ENCODE measurements at regions of chr2 and their contacts with region 1.

Region 1: GRCh38 chr2:157789933-157790511 is 86.1 kb downstream of the ACVR1 start:
- DNase-seq: peak; percentile 16
- H3K4me3 Mint-ChIP-seq: no peak overlapping the region
- H3K27ac Mint-ChIP-seq: no peak overlapping the region
- H3K4me1 Mint-ChIP-seq: peaks cover 33% of the 10 kb centered on the region
- H3K27me3 Mint-ChIP-seq: no peaks in the 10 kb centered on the region

Region 2: DNA sequence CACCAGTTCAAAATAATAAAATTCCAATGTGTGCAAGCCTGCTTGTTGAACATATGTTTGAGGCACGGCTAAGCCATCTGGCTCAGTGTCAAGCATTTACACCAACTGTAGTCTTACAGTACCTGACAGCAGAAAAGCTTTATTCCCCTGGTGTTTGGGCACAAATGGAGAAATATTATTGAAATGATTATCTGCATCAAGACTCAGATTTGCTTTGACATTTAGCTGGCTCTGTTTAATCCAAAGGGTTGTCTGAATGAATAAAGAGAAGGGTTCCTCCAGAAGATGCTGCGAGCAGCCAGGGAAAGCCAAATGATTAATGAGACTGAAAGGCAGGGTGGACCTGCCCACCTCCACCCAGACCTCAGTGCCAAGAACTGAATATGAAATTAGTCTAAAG is 925.7 kb before region 1 on chr2:
- CTCF ChIA-PET with region 1: no interaction called
- POLR2A ChIA-PET with region 1: no interaction called
- intact Hi-C with region 1: no loop called
- DNase-seq: no peak
- H3K4me3 Mint-ChIP-seq: no peak overlapping the region
- H3K27ac Mint-ChIP-seq: no peak overlapping the region
- H3K4me1 Mint-ChIP-seq: no peaks in the 10 kb centered on the region
- H3K27me3 Mint-ChIP-seq: peaks cover 1% of the 10 kb centered on the region

Region 3: DNA sequence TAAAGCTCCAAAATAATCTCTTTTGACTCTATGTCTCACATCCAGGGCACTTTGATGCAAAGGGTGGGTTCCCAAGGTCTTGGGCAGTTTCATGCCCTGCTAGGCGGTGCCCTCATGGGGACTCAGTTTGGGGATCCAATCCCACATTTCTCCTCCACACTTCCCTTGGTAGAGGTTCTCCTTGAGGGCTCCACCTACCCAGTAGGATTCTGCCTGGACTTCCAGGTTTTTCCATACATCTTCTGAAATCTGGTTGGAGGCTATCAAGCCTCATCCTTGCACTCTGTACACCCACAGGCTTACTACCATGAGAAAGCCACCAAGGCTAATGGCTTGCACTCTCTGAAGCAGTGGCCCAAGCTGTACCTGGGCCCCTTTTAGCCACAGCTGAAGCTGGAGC is 414.6 kb before region 1 on chr2:
- CTCF ChIA-PET with region 1: no interaction called
- POLR2A ChIA-PET with region 1: no interaction called
- intact Hi-C with region 1: no loop called
- DNase-seq: no peak
- H3K4me3 Mint-ChIP-seq: no peak overlapping the region
- H3K27ac Mint-ChIP-seq: no peak overlapping the region
- H3K4me1 Mint-ChIP-seq: peaks cover 8% of the 10 kb centered on the region
- H3K27me3 Mint-ChIP-seq: no peaks in the 10 kb centered on the region

Region 4: GRCh38 chr2:157820193-157820592 is 30.2 kb after region 1 on chr2:
- CTCF ChIA-PET with region 1: no interaction called
- POLR2A ChIA-PET with region 1: no interaction called
- intact Hi-C with region 1: no loop called
- DNase-seq: no peak
- H3K4me3 Mint-ChIP-seq: no peak overlapping the region
- H3K27ac Mint-ChIP-seq: no peak overlapping the region
- H3K4me1 Mint-ChIP-seq: peaks cover 6% of the 10 kb centered on the region
- H3K27me3 Mint-ChIP-seq: no peaks in the 10 kb centered on the region

Region 5: GRCh38 chr2:157830696-157831570 is 40.9 kb after region 1 on chr2:
- CTCF ChIA-PET with region 1: no interaction called
- POLR2A ChIA-PET with region 1: no interaction called
- intact Hi-C with region 1: loop called (anchors 5 kb)
- DNase-seq: no peak
- H3K4me3 Mint-ChIP-seq: no peak overlapping the region
- H3K27ac Mint-ChIP-seq: no peak overlapping the region
- H3K4me1 Mint-ChIP-seq: peaks cover 30% of the 10 kb centered on the region
- H3K27me3 Mint-ChIP-seq: no peaks in the 10 kb centered on the region

Region 6: GRCh38 chr2:158968396-158969161 is 1178.6 kb after region 1 on chr2 and contains the start of gene TANC1:
- CTCF ChIA-PET with region 1: no interaction called
- POLR2A ChIA-PET with region 1: no interaction called
- intact Hi-C with region 1: no loop called
- DNase-seq: peak; percentile 79
- H3K4me3 Mint-ChIP-seq: peak within 1 kb of the TSS; percentile 70
- H3K27ac Mint-ChIP-seq: no peak within 1 kb of the TSS
- H3K4me1 Mint-ChIP-seq: peaks cover 15% of the 10 kb centered on the region
- H3K27me3 Mint-ChIP-seq: peaks cover 41% of the 10 kb centered on the region
- total RNA-seq, gene TANC1: 0.63 to 0.86 TPM